ENCODE measurements at regions of chr4 and their contacts with region 1.

Region 1: DNA sequence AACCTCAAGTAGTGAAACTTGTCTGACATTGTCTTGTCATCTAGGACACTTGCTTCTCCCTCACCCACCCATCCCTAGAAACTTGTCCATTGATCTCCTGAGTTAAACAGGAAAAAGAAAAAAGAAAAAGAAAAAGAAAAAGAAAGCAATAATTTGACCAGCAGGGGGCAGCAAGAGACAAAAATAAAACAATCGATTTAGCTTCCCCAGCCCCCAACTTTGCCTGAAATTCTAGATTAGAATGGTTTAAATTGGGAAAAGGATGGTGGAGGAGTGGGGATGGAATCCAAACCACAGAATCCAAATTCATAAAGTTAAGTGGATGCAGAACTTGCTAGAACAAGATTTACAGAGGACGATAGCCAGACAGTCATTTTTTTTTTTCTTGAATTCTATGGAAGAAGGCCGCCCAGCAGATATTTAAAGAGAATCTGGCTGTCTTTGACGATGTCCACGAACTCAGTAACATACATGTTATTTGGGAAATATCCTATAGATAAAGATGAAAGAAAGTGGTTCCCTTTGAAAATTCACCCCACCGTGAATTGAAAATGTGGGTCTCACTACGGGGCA is 282.9 kb downstream of the USP46 start:
- DNase-seq: no peak
- ATAC-seq: no peak

Region 2: DNA sequence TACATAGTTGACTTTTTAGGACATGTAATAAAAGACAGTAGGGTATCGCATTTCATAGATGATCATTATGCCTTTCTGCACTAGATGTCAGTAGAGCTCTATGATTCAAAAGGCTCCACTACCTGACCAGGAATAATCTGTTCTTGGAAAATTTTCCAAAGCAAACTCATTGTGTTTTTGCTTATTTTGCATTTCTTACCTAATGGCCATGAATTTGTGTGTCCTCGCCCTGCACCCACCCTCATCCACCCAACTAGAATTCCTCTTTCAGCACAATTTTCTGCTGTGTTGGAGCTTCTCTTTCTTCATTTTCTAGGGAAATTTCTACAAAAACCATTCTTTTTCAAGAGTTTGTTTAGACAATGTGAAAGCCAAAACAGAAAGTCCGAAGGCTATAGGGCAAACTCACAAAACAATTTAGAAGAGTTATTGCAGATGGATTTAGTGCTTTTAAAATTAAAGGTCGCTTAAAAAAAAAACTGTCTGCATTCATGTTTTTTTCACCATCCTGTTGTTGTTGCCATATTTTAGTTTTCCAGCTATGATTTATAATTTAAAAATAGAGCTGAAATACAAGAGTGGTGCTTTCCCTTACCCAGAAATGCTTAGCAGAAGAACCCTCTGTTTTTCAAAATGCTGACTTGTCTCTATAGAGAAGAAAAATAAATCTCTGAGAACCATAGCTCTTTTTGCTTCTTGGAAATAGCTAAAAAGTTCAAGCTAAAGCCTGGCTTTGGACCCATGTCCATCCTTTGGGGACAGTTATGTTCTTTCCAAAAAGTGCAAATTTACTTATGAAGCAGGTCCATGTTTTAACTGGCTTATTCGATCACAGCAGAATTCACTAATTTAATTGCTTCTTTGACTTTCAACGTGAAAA is 141.4 kb before region 1 on chr4:
- intact Hi-C with region 1: loop called (anchors 10 kb)
- DNase-seq: no peak
- ATAC-seq: peak; percentile 93